Caco-2 (cell line): ENCODE measurements at regions of chrX and their contacts with region 1.

Region 1: GRCh38 chrX:31199056-31199769 is 127.4 kb upstream of the FTHL17 start:
- DNase-seq: no peak
- H3K4me3 ChIP-seq: no peak overlapping the region
- H3K4me3 Mint-ChIP-seq: no peak overlapping the region
- H3K27ac Mint-ChIP-seq: peak overlapping the region; percentile 87
- H3K4me1 ChIP-seq: peaks cover 40% of the 10 kb centered on the region
- H3K4me1 Mint-ChIP-seq: peaks cover 20% of the 10 kb centered on the region
- H3K27me3 ChIP-seq: no peaks in the 10 kb centered on the region
- H3K27me3 Mint-ChIP-seq: no peaks in the 10 kb centered on the region
- CTCF ChIP-seq: no peak

Region 2: GRCh38 chrX:31154946-31155345 is 44.3 kb before region 1 on chrX:
- CTCF ChIA-PET with region 1: no interaction called
- POLR2A ChIA-PET with region 1: no interaction called
- intact Hi-C with region 1: no loop called
- DNase-seq: no peak
- H3K4me3 ChIP-seq: no peak overlapping the region
- H3K4me3 Mint-ChIP-seq: no peak overlapping the region
- H3K27ac Mint-ChIP-seq: no peak overlapping the region
- H3K4me1 ChIP-seq: no peaks in the 10 kb centered on the region
- H3K4me1 Mint-ChIP-seq: no peaks in the 10 kb centered on the region
- H3K27me3 ChIP-seq: no peaks in the 10 kb centered on the region
- H3K27me3 Mint-ChIP-seq: no peaks in the 10 kb centered on the region
- CTCF ChIP-seq: no peak

Region 3: DNA sequence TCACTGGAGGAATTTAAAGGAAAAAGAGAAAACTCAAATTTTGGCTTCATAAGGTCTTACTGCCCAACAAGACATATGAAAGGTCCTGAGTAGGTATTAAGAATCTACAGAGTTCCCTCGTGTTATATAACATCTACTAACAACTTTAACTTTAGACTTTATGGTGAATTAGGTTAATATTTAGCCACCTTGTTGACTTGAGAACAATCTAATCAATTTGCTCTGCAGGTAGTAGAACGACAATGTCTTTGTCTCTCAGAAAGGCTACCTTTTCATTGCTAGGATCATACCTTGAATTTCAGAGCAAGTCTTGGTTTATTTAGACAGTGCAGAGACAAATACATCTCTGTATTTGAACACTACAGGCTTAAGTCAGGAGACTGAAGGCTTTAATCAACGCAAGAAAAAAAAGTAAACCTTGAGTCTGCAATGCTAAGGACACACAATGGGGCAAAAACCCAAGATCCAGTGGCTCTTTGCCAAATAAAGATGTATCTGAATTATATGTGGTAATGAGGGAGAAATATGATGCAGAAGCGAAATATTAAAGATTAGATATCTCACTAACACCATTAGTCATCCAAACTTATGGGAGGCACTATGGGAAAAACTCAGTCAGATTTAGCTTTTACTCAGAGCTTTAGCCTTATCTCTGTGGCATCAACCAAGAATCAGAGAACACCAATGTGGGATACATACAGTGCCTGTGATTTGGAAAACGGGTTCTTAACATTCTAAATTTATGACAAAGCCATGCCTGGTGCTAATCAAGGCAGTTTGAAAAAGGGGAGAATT is 33.8 kb before region 1 on chrX:
- CTCF ChIA-PET with region 1: no interaction called
- POLR2A ChIA-PET with region 1: no interaction called
- intact Hi-C with region 1: loop called (anchors 1 kb)
- DNase-seq: peak in 1 of 2 experiments; percentile 0
- H3K4me3 ChIP-seq: no peak overlapping the region
- H3K4me3 Mint-ChIP-seq: no peak overlapping the region
- H3K27ac Mint-ChIP-seq: no peak overlapping the region
- H3K4me1 ChIP-seq: peaks cover 12% of the 10 kb centered on the region
- H3K4me1 Mint-ChIP-seq: peaks cover 21% of the 10 kb centered on the region
- H3K27me3 ChIP-seq: no peaks in the 10 kb centered on the region
- H3K27me3 Mint-ChIP-seq: no peaks in the 10 kb centered on the region
- CTCF ChIP-seq: no peak

Region 4: GRCh38 chrX:31213941-31214340 is 14.7 kb after region 1 on chrX:
- CTCF ChIA-PET with region 1: interaction called, 4 read pairs
- POLR2A ChIA-PET with region 1: no interaction called
- intact Hi-C with region 1: loop called (anchors 1 kb)
- DNase-seq: peak in 1 of 2 experiments; percentile 25
- H3K4me3 ChIP-seq: no peak overlapping the region
- H3K4me3 Mint-ChIP-seq: no peak overlapping the region
- H3K27ac Mint-ChIP-seq: no peak overlapping the region
- H3K4me1 ChIP-seq: no peaks in the 10 kb centered on the region
- H3K4me1 Mint-ChIP-seq: peaks cover 13% of the 10 kb centered on the region
- H3K27me3 ChIP-seq: no peaks in the 10 kb centered on the region
- H3K27me3 Mint-ChIP-seq: no peaks in the 10 kb centered on the region
- CTCF ChIP-seq: peak; percentile 36 to 62

Region 5: DNA sequence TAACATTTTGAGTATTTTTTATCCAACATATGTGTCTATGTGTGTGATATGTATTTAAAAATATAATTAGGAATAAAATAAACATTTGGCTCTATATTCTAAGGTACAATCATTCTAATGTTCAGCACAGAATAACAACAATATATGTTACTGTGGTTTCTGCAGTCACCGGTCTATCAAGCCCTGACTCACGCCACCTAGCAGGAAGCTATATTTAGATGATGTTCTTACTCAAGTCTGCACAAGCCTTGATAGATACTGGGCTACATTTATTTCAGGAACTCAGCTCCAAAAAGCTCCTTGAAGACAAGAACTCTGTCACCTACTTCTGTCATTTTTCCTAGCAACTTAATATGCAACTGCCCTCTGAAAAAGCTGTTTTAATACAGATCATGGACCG is 24.6 kb after region 1 on chrX:
- CTCF ChIA-PET with region 1: no interaction called
- POLR2A ChIA-PET with region 1: no interaction called
- intact Hi-C with region 1: loop called (anchors 1 kb)
- DNase-seq: no peak
- H3K4me3 ChIP-seq: no peak overlapping the region
- H3K4me3 Mint-ChIP-seq: no peak overlapping the region
- H3K27ac Mint-ChIP-seq: no peak overlapping the region
- H3K4me1 ChIP-seq: peaks cover 23% of the 10 kb centered on the region
- H3K4me1 Mint-ChIP-seq: peaks cover 9% of the 10 kb centered on the region
- H3K27me3 ChIP-seq: no peaks in the 10 kb centered on the region
- H3K27me3 Mint-ChIP-seq: no peaks in the 10 kb centered on the region
- CTCF ChIP-seq: no peak

Region 6: DNA sequence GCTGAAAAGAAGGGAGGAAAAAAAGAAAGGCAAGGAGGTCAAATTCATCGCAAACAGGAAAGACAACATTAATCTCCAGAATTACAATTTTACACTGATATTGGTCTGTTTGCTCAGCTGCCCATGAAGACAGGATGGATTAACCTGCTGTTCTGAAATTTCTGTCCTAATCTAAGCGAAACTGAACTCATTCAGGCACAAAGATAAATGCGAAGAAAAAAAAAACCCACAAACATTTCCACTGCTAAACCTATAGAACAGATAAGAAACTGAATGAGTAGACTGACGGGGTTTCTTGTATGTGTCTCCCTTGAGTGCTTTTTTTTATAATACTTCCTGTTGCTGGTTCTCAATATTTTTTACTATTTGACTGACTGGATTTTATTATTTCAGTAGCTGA is 124.4 kb after region 1 on chrX:
- CTCF ChIA-PET with region 1: no interaction called
- POLR2A ChIA-PET with region 1: no interaction called
- intact Hi-C with region 1: no loop called
- DNase-seq: peak in 1 of 2 experiments; percentile 11
- H3K4me3 ChIP-seq: no peak overlapping the region
- H3K4me3 Mint-ChIP-seq: peak overlapping the region; percentile 52
- H3K27ac Mint-ChIP-seq: no peak overlapping the region
- H3K4me1 ChIP-seq: no peaks in the 10 kb centered on the region
- H3K4me1 Mint-ChIP-seq: no peaks in the 10 kb centered on the region
- H3K27me3 ChIP-seq: no peaks in the 10 kb centered on the region
- H3K27me3 Mint-ChIP-seq: no peaks in the 10 kb centered on the region
- CTCF ChIP-seq: no peak

Region 7: GRCh38 chrX:31356275-31357263 is 157.4 kb after region 1 on chrX:
- CTCF ChIA-PET with region 1: no interaction called
- POLR2A ChIA-PET with region 1: no interaction called
- intact Hi-C with region 1: no loop called
- DNase-seq: no peak
- H3K4me3 ChIP-seq: no peak overlapping the region
- H3K4me3 Mint-ChIP-seq: no peak overlapping the region
- H3K27ac Mint-ChIP-seq: no peak overlapping the region
- H3K4me1 ChIP-seq: no peaks in the 10 kb centered on the region
- H3K4me1 Mint-ChIP-seq: peaks cover 14% of the 10 kb centered on the region
- H3K27me3 ChIP-seq: no peaks in the 10 kb centered on the region
- H3K27me3 Mint-ChIP-seq: no peaks in the 10 kb centered on the region
- CTCF ChIP-seq: no peak

Region 8: GRCh38 chrX:31445542-31445941 is 246.3 kb after region 1 on chrX:
- CTCF ChIA-PET with region 1: no interaction called
- POLR2A ChIA-PET with region 1: no interaction called
- intact Hi-C with region 1: no loop called
- DNase-seq: no peak
- H3K4me3 ChIP-seq: no peak overlapping the region
- H3K4me3 Mint-ChIP-seq: no peak overlapping the region
- H3K27ac Mint-ChIP-seq: no peak overlapping the region
- H3K4me1 ChIP-seq: peaks cover 5% of the 10 kb centered on the region; the same call in 1 of the 2 replicates
- H3K4me1 Mint-ChIP-seq: peaks cover 7% of the 10 kb centered on the region
- H3K27me3 ChIP-seq: no peaks in the 10 kb centered on the region
- H3K27me3 Mint-ChIP-seq: no peaks in the 10 kb centered on the region
- CTCF ChIP-seq: no peak